OCI-LY7 (cell line): ENCODE measurements at regions of chr14 and their contacts with region 1.

Region 1: DNA sequence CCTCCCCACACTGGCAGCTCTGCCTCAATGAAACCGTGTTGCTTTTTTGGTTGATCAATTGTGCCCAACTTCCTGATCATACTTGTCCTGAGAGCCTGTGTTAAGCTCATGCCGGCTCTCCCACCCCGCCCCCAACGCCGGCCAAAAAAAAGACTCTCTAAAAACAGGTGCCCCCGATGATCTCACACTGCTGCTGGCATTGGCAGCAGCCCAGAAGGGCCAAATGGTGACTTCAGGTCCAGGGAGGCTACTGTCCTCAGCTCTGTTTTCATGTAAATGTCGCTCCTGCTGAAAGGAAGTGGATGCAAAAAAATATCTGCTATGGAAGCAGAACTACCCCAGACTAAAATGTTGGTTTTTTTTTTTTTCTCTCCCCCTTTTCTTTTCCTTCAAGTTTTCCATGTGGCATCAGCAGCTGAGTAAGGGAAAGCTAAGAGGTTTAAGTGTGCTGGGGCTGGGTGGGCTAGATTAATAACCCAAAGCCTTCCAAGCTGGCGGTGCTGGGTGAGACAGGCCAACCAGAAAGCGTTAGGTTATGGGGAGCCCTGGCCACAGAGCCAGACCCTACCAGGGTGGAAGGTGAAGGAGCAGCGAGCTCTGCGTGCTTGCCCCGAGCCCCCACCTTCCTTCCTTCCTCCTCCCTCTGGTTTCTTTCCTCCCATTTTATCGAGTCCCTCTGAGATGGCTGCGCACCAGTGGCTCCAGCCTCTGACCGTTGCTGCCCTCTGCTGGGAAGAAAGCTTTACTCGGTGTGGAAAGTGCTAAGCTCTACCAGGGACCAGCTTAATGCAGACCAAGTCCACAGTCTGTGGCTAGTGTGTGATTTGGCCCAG is 396.1 kb downstream of the NRXN3 start:
- DNase-seq: peak; percentile 51
- H3K4me3 ChIP-seq: no peak overlapping the region
- H3K27ac ChIP-seq: no peak overlapping the region
- H3K4me1 ChIP-seq: no peaks in the 10 kb centered on the region
- CTCF ChIP-seq: peak; percentile 77

Region 2: GRCh38 chr14:77660754-77661153 is 905.5 kb before region 1 on chr14:
- CTCF ChIA-PET with region 1: no interaction called
- POLR2A ChIA-PET with region 1: no interaction called
- intact Hi-C with region 1: loop called (anchors 5 kb)
- DNase-seq: no peak
- H3K4me3 ChIP-seq: no peak overlapping the region
- H3K27ac ChIP-seq: no peak overlapping the region
- H3K4me1 ChIP-seq: peaks cover 6% of the 10 kb centered on the region
- CTCF ChIP-seq: no peak

Region 3: DNA sequence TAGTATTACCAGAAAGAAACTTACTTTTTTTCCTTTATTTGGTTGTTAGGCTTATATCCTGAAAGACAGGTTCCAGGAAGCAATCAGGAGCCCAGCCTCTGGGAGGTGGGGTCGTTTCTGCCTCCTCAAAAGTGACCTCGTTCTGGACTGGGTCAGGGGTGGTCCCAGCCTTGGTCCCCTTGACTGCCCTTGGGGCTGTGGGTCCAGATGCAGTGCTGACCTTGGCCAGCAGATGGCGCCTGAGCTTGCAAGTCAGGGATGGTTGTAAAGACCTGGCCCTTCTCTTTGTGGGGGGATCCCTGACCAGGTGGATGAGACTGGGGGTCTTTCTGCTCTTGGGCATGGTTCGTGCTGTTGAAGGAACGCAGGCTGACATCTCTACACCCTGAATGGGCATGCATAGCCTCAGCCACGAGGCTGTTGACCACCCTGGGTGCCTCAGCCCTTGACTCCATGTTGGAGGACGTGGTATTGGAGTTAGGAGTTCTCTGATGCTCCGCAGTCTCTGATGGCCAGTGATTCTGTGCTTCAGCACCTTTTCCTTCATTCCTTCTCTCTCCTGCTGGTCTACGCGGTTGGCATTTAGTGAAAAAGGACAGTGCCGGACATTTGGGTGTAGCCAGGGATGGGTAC is 704.0 kb before region 1 on chr14:
- CTCF ChIA-PET with region 1: no interaction called
- POLR2A ChIA-PET with region 1: no interaction called
- intact Hi-C with region 1: loop called (anchors 10 kb)
- DNase-seq: peak; percentile 70
- H3K4me3 ChIP-seq: no peak overlapping the region
- H3K27ac ChIP-seq: no peak overlapping the region
- H3K4me1 ChIP-seq: no peaks in the 10 kb centered on the region
- CTCF ChIP-seq: peak; percentile 97

Region 4: DNA sequence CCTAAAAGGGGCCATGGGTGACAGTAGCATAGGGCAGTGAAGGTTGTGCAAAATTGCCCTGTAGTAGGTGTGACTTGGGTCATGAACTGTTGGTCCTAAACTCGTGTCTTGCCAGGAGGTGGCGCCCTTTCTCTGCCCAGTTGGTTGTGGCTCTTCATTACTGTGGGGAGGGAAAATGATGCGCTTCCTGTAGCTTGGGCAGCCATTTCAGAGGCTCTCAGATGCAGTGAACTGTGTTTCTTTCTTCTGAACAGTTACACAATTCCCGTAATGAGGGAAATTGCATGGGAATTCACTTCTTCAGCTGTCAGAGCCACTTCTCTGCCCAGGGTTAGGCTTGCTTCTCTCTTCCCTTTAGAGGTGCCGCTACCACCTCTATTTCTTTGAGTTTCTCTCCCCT is 544.2 kb before region 1 on chr14:
- CTCF ChIA-PET with region 1: no interaction called
- POLR2A ChIA-PET with region 1: no interaction called
- intact Hi-C with region 1: loop called (anchors 1 kb)
- DNase-seq: peak; percentile 61
- H3K4me3 ChIP-seq: no peak overlapping the region
- H3K27ac ChIP-seq: no peak overlapping the region
- H3K4me1 ChIP-seq: no peaks in the 10 kb centered on the region
- CTCF ChIP-seq: peak; percentile 85

Region 5: GRCh38 chr14:78448164-78449094 is 117.8 kb before region 1 on chr14:
- CTCF ChIA-PET with region 1: no interaction called
- POLR2A ChIA-PET with region 1: no interaction called
- intact Hi-C with region 1: loop called (anchors 1 kb)
- DNase-seq: peak; percentile 50
- H3K4me3 ChIP-seq: no peak overlapping the region
- H3K27ac ChIP-seq: no peak overlapping the region
- H3K4me1 ChIP-seq: no peaks in the 10 kb centered on the region
- CTCF ChIP-seq: peak; percentile 87